ENCODE measurements at regions of chr2 and their contacts with region 1.

Region 1: GRCh38 chr2:240567872-240568677 is at the start of gene RNPEPL1:
- DNase-seq: peak; percentile 82
- ATAC-seq: peak; percentile 31
- total RNA-seq, gene RNPEPL1: 98.4 TPM

Region 2: GRCh38 chr2:240586198-240586918 is 18.3 kb after region 1 on chr2 and contains the start of gene CAPN10:
- intact Hi-C with region 1: loop called (anchors 1 kb)
- DNase-seq: peak; percentile 100
- ATAC-seq: peak; percentile 95
- total RNA-seq, gene CAPN10: 51.8 TPM

Region 3: GRCh38 chr2:240604291-240604938 is 36.3 kb after region 1 on chr2:
- intact Hi-C with region 1: loop called (anchors 1 kb)
- DNase-seq: peak; percentile 89
- ATAC-seq: peak; percentile 56

Region 4: DNA sequence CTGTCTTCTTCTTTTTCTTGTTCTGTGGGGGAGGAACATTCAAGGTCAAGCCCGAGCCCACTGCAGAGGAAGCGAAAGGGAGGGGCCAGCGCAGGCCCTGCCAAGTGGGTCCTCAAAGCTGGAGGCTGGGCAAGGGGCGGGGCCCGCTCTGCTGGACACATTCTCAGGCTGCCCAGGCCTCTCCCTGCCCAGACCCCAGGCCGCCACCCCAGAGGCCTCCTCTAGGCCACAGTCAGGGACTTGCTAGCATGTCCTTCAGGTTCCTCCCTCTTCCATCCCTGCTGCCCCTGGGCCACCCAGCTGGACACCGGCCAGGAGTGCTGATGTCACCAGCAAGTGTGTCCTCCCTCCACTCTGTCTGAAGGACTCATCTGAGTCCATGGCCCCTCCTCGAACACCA is 207.8 kb after region 1 on chr2:
- intact Hi-C with region 1: no loop called
- DNase-seq: no peak
- ATAC-seq: no peak

Measured in Right ventricle myocardium inferior (tissue), 1 donor.